IMR-90 (cell line): ENCODE measurements at regions of chr5 and their contacts with region 1.

Region 1: GRCh38 chr5:149561848-149562247 is 10.6 kb upstream of the CSNK1A1 start:
- DNase-seq: peak; percentile 98
- ATAC-seq: peak; percentile 72
- H3K4me3 ChIP-seq: no peak overlapping the region
- H3K27ac ChIP-seq: peak overlapping the region; percentile 100
- H3K4me1 ChIP-seq: peaks cover 14% of the 10 kb centered on the region
- H3K27me3 ChIP-seq: no peaks in the 10 kb centered on the region
- CTCF ChIP-seq: no peak
- POLR2A ChIP-seq: no peak
- RAD21 ChIP-seq: no peak

Region 2: DNA sequence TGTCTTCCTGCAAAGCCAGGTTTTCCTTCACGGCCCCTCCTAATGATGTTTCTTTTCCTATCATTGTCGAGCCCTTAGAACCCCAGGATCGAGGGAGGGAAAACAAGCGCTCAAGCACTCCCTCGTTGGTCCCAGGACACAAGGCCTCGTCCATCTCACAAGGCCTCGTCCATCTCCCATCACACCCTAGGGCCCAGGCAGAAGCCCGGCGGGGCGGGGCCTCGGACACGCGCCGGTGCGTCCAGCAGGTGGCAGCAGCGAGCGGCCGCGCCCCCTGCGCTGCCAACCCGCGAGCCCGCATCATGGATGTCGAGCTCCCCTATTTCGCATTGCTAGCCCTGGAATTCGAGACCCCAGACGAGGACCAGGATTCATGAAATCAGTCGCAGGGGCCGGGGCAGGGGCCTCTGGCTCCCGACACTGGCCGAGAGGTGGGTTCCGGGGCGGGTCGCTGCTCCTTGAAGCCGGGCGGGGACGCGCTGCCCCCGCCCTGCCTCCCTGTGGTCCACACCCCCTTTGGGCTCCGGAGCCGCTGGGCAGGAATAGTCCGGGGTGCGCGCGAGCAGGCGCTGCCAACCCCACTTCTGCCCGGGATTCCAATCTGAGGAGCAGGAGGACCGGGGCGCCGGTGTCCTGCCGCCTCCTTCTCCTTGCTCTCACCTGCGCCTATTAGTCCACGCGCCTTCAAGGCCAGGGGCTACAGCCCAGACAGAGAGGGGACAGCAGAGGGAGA is 420.5 kb before region 1 on chr5 and contains the start of gene ABLIM3:
- CTCF ChIA-PET with region 1: no interaction called
- POLR2A ChIA-PET with region 1: no interaction called
- dilution Hi-C with region 1: no loop called
- in situ Hi-C with region 1: no loop called
- intact Hi-C with region 1: loop called (anchors 10 kb)
- DNase-seq: peak; percentile 55
- ATAC-seq: peak; percentile 84
- H3K4me3 ChIP-seq: peak within 1 kb of the TSS; percentile 70
- H3K27ac ChIP-seq: peak within 1 kb of the TSS; percentile 67
- H3K4me1 ChIP-seq: peaks cover 11% of the 10 kb centered on the region
- H3K27me3 ChIP-seq: no peaks in the 10 kb centered on the region
- CTCF ChIP-seq: peak; percentile 95
- POLR2A ChIP-seq: peak; percentile 72
- RAD21 ChIP-seq: peak; percentile 81
- total RNA-seq, gene ABLIM3: 33.3 and 34.2 TPM in 2 replicates

Region 3: GRCh38 chr5:149317281-149318048 is 244.4 kb before region 1 on chr5:
- CTCF ChIA-PET with region 1: no interaction called
- POLR2A ChIA-PET with region 1: no interaction called
- dilution Hi-C with region 1: no loop called
- in situ Hi-C with region 1: no loop called
- intact Hi-C with region 1: loop called (anchors 2 kb)
- DNase-seq: peak; percentile 58
- ATAC-seq: peak; percentile 56
- H3K4me3 ChIP-seq: no peak overlapping the region
- H3K27ac ChIP-seq: 0 out of 2 replicates have a peak overlapping the region, but pooled peaks have one; percentile 4
- H3K4me1 ChIP-seq: peaks cover 6% of the 10 kb centered on the region
- H3K27me3 ChIP-seq: no peaks in the 10 kb centered on the region
- CTCF ChIP-seq: peak; percentile 77
- POLR2A ChIP-seq: no peak
- RAD21 ChIP-seq: peak; percentile 76

Region 4: GRCh38 chr5:149381987-149382340 is 179.9 kb before region 1 on chr5:
- CTCF ChIA-PET with region 1: interaction called, 3 read pairs
- POLR2A ChIA-PET with region 1: no interaction called
- dilution Hi-C with region 1: no loop called
- in situ Hi-C with region 1: no loop called
- intact Hi-C with region 1: loop called (anchors 1 kb)
- DNase-seq: peak; percentile 66
- ATAC-seq: peak; percentile 93
- H3K4me3 ChIP-seq: no peak overlapping the region
- H3K27ac ChIP-seq: peak overlapping the region; percentile 50; the same call in 1 of the 2 replicates
- H3K4me1 ChIP-seq: peaks cover 22% of the 10 kb centered on the region
- H3K27me3 ChIP-seq: no peaks in the 10 kb centered on the region
- CTCF ChIP-seq: peak; percentile 92
- POLR2A ChIP-seq: no peak
- RAD21 ChIP-seq: peak; percentile 90

Region 5: DNA sequence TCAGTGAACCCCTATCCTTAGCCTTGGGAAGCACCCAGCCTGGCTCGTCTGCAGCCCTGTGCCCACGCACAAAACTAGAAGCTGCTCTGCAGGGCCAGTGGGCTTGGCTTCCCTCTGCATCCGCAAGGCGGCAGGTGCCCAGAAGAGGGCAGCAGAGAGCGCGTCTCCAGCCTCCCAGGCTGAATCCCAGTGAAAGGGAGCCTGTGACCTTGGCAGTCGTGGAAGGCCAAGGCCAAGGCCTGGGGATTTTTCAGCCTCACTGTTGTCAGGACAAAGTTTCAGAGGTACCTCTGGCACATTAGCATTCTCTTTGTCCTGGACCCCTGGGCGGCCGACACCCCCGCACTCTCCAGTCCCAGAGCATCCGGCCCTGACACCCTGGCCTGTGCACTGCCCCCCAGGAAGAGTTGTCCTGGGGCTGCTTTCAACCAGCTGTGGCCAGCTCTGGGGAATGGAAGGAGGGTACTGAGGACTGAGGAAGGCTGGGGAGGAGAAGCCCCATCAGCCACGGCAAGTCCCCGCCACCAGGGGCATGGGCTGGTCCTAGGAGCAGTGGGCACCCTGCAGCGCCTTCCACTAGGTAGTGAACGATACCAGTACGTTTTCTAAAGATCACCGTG is 119.2 kb before region 1 on chr5:
- CTCF ChIA-PET with region 1: interaction called, 14 read pairs
- POLR2A ChIA-PET with region 1: interaction called, 11 read pairs
- dilution Hi-C with region 1: no loop called
- in situ Hi-C with region 1: loop called (anchors 5 kb)
- intact Hi-C with region 1: loop called (anchors 1 kb)
- DNase-seq: peak; percentile 70
- ATAC-seq: peak; percentile 82
- H3K4me3 ChIP-seq: no peak overlapping the region
- H3K27ac ChIP-seq: peak overlapping the region; percentile 74
- H3K4me1 ChIP-seq: peaks cover 13% of the 10 kb centered on the region
- H3K27me3 ChIP-seq: no peaks in the 10 kb centered on the region
- CTCF ChIP-seq: peak; percentile 92
- POLR2A ChIP-seq: no peak
- RAD21 ChIP-seq: peak; percentile 96

Region 6: GRCh38 chr5:149551200-149552037 is 10.4 kb before region 1 on chr5 and contains the start of gene CSNK1A1:
- CTCF ChIA-PET with region 1: interaction called, 6 read pairs
- POLR2A ChIA-PET with region 1: interaction called, 4 read pairs
- dilution Hi-C with region 1: no loop called
- in situ Hi-C with region 1: no loop called
- intact Hi-C with region 1: loop called (anchors 1 kb)
- DNase-seq: peak; percentile 98
- ATAC-seq: peak; percentile 93
- H3K4me3 ChIP-seq: peak within 1 kb of the TSS; percentile 81
- H3K27ac ChIP-seq: peak within 1 kb of the TSS; percentile 100
- H3K4me1 ChIP-seq: no peaks in the 10 kb centered on the region; the same call in 1 of the 2 replicates
- H3K27me3 ChIP-seq: no peaks in the 10 kb centered on the region
- CTCF ChIP-seq: peak; percentile 77
- POLR2A ChIP-seq: peak; percentile 98
- RAD21 ChIP-seq: peak; percentile 77
- total RNA-seq, gene CSNK1A1: 419 and 573 TPM in 2 replicates

Region 7: GRCh38 chr5:150245111-150245789 is 683.4 kb after region 1 on chr5:
- CTCF ChIA-PET with region 1: no interaction called
- POLR2A ChIA-PET with region 1: no interaction called
- dilution Hi-C with region 1: no loop called
- in situ Hi-C with region 1: no loop called
- intact Hi-C with region 1: no loop called
- DNase-seq: peak; percentile 28
- ATAC-seq: peak; percentile 83
- H3K4me3 ChIP-seq: no peak overlapping the region
- H3K27ac ChIP-seq: no peak overlapping the region
- H3K4me1 ChIP-seq: peaks cover 8% of the 10 kb centered on the region; the same call in 1 of the 2 replicates
- H3K27me3 ChIP-seq: peaks cover 9% of the 10 kb centered on the region
- CTCF ChIP-seq: no peak
- POLR2A ChIP-seq: no peak
- RAD21 ChIP-seq: no peak